ENCODE measurements at regions of chr17 and their contacts with region 1.

Region 1: DNA sequence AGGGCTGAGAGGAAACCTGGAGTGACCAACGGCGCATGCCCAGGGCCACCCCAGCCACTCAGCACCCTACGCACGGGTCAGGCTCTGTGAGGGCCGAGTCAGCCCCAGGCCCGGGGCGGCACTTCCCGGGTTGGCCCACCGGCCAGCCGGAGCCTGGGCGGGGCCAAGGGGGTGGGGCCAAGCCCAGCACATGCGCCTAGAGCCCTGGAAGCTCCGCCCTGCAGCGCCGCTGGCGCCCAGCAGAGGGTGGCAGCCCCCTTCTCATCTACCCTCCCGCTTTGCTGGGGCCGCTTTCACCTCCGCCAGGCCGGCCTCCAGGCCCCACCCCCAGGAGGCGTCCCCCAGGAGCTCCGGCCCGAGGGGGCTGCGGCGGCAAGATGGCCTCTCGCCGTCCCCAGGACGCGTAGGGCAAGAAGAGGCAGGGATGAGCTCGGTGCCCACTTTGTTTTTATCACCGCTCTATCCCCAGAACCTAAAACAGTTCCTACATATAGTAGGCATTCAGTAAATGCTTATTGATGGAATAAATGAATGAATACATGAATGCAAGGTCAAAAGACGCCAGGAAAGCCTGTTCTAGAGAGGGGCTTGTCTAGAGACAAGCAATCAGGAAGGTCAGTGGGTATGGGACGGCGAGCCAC is 31.3 kb downstream of the MYO18A start:
- DNase-seq: peak; percentile 86 to 99 (median 92)

Region 2: DNA sequence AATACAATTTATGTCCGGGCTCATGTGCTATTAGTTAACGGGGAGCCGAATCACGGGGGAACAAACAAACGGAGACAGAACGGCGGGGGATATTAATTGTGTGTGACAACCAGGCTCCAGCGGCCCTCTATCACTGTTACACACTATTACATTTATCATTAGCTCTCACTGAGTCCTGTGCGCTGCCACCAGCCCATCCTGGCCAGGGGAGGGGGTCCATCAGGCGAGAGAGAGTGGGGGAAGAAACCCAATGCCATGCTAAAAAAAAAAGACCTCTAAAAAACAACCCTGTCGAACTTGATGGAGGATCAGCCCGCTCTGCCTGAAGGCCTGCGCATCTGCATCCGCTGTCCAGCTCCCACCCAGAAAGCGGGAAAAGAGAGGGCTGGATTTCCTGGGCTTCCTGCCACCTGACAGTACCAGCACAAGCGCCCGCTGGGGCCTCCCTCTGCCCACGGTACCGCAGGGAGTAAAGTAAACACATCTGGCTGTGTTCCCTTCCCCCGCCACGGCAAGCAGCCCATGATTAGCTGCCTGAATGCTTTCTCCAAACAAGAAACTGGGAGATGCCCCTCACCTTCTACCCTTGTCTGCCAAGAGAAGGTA is 64.3 kb before region 1 on chr17:
- intact Hi-C with region 1: no loop called
- DNase-seq: peak in 7 of 10 donors; percentile 35 to 92 (median 57)

Region 3: DNA sequence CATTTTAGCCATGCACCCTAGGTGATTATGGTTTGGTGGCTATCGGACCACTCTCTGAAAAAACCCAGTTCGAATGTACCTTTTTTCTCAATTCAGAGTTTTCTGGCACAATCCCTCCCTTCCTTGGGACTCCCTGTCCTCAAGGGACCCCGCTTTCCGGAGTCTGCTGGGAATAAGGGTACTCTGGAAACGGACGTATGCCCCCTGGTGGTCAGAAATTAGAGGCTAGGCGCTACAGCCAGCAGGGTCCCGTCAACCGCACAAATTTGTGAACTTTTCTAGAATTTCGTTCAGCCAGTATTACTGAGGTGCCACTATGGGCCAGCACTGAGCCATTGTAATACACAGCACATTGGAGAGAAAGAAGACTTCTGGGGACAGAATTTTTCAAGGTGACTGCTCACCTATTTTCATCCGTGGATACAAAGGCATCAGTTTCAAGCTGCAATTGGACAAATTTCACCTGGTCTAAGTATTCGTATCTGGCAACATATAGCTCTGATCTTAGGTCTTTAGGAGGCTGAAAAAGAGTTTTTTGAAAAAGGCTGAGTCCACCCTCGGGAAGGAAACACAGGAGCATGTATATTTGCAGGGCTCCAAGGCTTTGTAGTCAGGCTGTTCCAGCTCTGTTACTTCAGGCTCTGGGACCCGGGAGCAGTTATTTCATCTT is 70.6 kb after region 1 on chr17:
- intact Hi-C with region 1: loop called (anchors 1 kb)
- DNase-seq: peak; percentile 63 to 96 (median 87)

Measured in posterior cingulate gyrus (tissue), 11 donors.